ENCODE measurements at regions of chr14 and their contacts with region 1.

Region 1: GRCh38 chr14:66507722-66508546 is at the start of gene GPHN:
- DNase-seq: peak; percentile 96 to 98 (median 97)
- ATAC-seq: peak; percentile 98 to 99 (median 98)
- H3K4me3 ChIP-seq: peak within 1 kb of the TSS; percentile 78 to 97 (median 89)
- H3K27ac ChIP-seq: peak within 1 kb of the TSS; percentile 88 to 97 (median 94)
- H3K4me1 ChIP-seq: peaks cover 0 to 42% (median 28%) of the 10 kb centered on the region in 12 donors
- H3K27me3 ChIP-seq: no peaks in the 10 kb centered on the region
- CTCF ChIP-seq: peak in 11 of 12 donors; percentile 15 to 79 (median 37)
- POLR2A ChIP-seq: peak in 1 of 2 donors; percentile 75
- total RNA-seq, gene GPHN: 17.7 to 37.1 (median 30.1) TPM

Region 2: GRCh38 chr14:66495218-66496098 is 12.5 kb before region 1 on chr14:
- intact Hi-C with region 1: no loop called
- DNase-seq: peak in 4 of 5 donors; percentile 30 to 39 (median 34)
- ATAC-seq: peak; percentile 66 to 95 (median 89)
- H3K4me3 ChIP-seq: peak overlapping the region in 5 of 12 donors; percentile 13 to 33 (median 28)
- H3K27ac ChIP-seq: no peak overlapping the region
- H3K4me1 ChIP-seq: peaks cover 0 to 20% (median 3%) of the 10 kb centered on the region in 12 donors
- H3K27me3 ChIP-seq: no peaks in the 10 kb centered on the region
- CTCF ChIP-seq: peak; percentile 65 to 90 (median 80)
- POLR2A ChIP-seq: no peak

Region 3: DNA sequence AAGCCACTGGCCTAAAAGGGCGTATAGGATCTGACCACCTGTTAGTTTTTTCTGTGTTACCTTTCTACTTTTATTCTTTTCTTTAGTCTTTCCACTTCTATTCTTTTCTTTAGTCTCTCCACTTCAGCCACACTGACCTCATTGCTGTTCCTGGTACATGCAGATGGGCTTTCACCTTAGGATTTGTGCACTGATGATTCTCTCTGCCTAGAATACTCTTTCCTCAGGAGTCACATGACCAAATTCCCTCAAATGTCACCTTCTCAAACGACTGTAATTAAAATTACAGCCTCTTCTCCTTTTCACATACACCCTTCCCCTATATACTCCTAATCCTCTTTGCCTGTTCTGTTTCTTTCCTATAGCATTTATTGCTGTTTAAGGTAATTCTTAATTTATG is 36.1 kb after region 1 on chr14:
- intact Hi-C with region 1: no loop called
- DNase-seq: no peak
- ATAC-seq: no peak
- H3K4me3 ChIP-seq: no peak overlapping the region
- H3K27ac ChIP-seq: no peak overlapping the region
- H3K4me1 ChIP-seq: peaks cover 0 to 21% (median 10%) of the 10 kb centered on the region in 12 donors
- H3K27me3 ChIP-seq: no peaks in the 10 kb centered on the region
- CTCF ChIP-seq: no peak
- POLR2A ChIP-seq: no peak

Region 4: GRCh38 chr14:66568220-66568619 is 60.3 kb after region 1 on chr14:
- intact Hi-C with region 1: loop called in 1 of 10 experiments (anchors 5 kb)
- DNase-seq: no peak
- ATAC-seq: no peak
- H3K4me3 ChIP-seq: no peak overlapping the region
- H3K27ac ChIP-seq: no peak overlapping the region
- H3K4me1 ChIP-seq: peaks cover 0 to 21% (median 4%) of the 10 kb centered on the region in 12 donors
- H3K27me3 ChIP-seq: no peaks in the 10 kb centered on the region
- CTCF ChIP-seq: peak in 3 of 12 donors; percentile 23 to 30 (median 25)
- POLR2A ChIP-seq: no peak

Region 5: DNA sequence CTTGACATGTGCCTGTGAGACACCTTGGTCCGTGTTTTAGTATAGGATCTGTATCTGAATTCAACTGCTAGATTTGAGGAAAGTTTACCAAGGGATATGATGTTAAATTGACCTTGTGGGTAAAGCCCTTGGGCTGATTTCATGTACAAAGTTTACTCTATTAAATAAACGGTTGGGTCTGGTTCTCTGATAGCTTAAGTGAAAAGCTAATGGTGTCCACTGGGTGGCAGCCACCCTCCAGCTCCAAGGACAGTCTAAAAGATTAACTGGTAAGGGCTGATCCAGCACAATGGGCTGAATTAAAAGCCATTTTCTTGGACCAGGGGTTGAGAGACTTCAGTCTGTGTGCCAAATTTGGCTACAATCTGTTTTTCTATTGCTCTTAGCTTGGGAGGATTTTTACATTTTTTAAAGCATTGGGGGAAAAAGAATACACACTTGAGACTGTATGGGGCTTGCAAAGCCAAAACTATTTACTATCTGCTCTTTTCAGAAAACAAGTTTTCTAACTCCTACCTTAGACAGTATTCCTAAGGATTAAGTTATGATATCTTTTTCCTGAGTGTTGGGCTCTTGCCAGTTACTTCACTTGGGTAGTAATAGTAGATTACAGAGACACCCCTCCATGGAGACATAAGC is 116.5 kb after region 1 on chr14:
- intact Hi-C with region 1: loop called in 1 of 10 experiments (anchors 5 kb)
- DNase-seq: peak; percentile 33 to 68 (median 44)
- ATAC-seq: peak; percentile 80 to 95 (median 91)
- H3K4me3 ChIP-seq: no peak overlapping the region
- H3K27ac ChIP-seq: peak overlapping the region in 1 of 12 donors; percentile 23
- H3K4me1 ChIP-seq: peaks cover 0 to 16% (median 6%) of the 10 kb centered on the region in 12 donors
- H3K27me3 ChIP-seq: no peaks in the 10 kb centered on the region
- CTCF ChIP-seq: peak; percentile 56 to 80 (median 68)
- POLR2A ChIP-seq: no peak

Region 6: GRCh38 chr14:66662374-66662773 is 154.4 kb after region 1 on chr14:
- intact Hi-C with region 1: loop called in 1 of 10 experiments (anchors 5 kb)
- DNase-seq: no peak
- ATAC-seq: no peak
- H3K4me3 ChIP-seq: no peak overlapping the region
- H3K27ac ChIP-seq: no peak overlapping the region
- H3K4me1 ChIP-seq: no peaks in the 10 kb centered on the region
- H3K27me3 ChIP-seq: no peaks in the 10 kb centered on the region
- CTCF ChIP-seq: peak in 9 of 12 donors; percentile 20 to 53 (median 36)
- POLR2A ChIP-seq: no peak

Region 7: GRCh38 chr14:66746316-66747006 is 238.5 kb after region 1 on chr14:
- intact Hi-C with region 1: loop called in 2 of 10 experiments (anchors 10 kb)
- DNase-seq: no peak
- ATAC-seq: peak in 3 of 4 donors; percentile 41 to 74 (median 48)
- H3K4me3 ChIP-seq: no peak overlapping the region
- H3K27ac ChIP-seq: no peak overlapping the region
- H3K4me1 ChIP-seq: peaks cover 0 to 23% (median 3%) of the 10 kb centered on the region in 12 donors
- H3K27me3 ChIP-seq: no peaks in the 10 kb centered on the region
- CTCF ChIP-seq: peak; percentile 40 to 66 (median 52)
- POLR2A ChIP-seq: no peak

Region 8: GRCh38 chr14:67240978-67241414 is 733.1 kb after region 1 on chr14:
- intact Hi-C with region 1: loop called in 1 of 10 experiments (anchors 2 kb)
- DNase-seq: peak; percentile 97 to 98 (median 98)
- ATAC-seq: peak; percentile 98 to 99 (median 99)
- H3K4me3 ChIP-seq: peak overlapping the region; percentile 74 to 98 (median 91)
- H3K27ac ChIP-seq: peak overlapping the region; percentile 92 to 99 (median 96)
- H3K4me1 ChIP-seq: peaks cover 0 to 23% (median 10%) of the 10 kb centered on the region in 12 donors
- H3K27me3 ChIP-seq: no peaks in the 10 kb centered on the region
- CTCF ChIP-seq: no peak
- POLR2A ChIP-seq: peak in 1 of 2 donors; percentile 65

Region 9: DNA sequence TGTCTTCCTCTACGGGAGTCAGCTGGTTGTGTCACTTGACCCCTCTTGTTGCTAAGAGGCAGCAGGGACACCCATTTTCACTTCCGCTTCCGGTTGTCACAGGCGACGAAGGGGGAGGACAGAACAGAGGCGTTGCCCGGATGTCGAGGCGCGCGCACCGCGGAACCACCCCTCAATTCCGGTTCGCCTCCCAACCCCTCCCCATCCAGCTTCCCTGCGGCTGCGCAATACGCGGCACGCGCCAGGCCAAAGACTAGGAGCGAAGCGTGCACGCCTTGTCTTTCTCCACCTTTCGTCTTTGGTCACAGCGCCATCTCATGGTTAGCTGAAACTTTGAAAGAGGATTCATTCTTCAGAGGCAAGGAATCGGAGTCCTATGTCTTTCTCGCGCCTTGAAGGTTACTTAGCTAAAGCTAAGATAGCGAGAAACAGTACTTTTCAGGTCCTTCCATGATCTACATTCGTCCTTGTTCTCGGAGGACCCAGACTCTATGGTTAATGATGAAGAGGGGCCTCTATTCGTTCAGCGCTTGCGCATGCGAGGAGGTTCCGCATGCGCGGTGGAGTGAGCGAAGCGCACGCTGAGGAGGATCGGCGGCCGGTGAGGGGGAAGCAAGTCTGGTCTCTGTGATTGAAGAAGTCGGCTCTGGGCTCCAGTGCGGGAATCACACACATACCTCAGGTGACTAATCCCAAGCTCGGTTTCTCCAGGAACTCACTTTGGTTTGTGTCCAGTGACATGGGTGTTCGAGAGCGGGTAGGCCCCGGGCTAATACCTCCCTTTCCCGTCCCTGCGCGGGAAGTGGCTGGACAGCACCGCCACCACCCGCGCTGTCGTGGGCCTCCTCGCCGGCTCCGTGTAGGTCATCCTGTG is 852.1 kb after region 1 on chr14 and contains the starts of genes ATP6V1D and EIF2S1:
- intact Hi-C with region 1: loop called in 1 of 10 experiments (anchors 5 kb)
- DNase-seq: peak; percentile 99 to 100 (median 100)
- ATAC-seq: peak; percentile 98 to 99 (median 98)
- H3K4me3 ChIP-seq: peak within 1 kb of the TSS; percentile 65 to 92 (median 82)
- H3K27ac ChIP-seq: peak within 1 kb of the TSS; percentile 89 to 99 (median 97)
- H3K4me1 ChIP-seq: peaks cover 9 to 70% (median 56%) of the 10 kb centered on the region in 12 donors
- H3K27me3 ChIP-seq: no peaks in the 10 kb centered on the region
- CTCF ChIP-seq: peak in 11 of 12 donors; percentile 76 to 100 (median 94)
- POLR2A ChIP-seq: peak in 1 of 2 donors; percentile 43
- total RNA-seq, gene ATP6V1D: 106 to 211 (median 167) TPM
- total RNA-seq, gene EIF2S1: 67.3 to 103 (median 91.7) TPM